HCT116 (cell line): ENCODE measurements at regions of chr1 and their contacts with region 1.

Region 1: DNA sequence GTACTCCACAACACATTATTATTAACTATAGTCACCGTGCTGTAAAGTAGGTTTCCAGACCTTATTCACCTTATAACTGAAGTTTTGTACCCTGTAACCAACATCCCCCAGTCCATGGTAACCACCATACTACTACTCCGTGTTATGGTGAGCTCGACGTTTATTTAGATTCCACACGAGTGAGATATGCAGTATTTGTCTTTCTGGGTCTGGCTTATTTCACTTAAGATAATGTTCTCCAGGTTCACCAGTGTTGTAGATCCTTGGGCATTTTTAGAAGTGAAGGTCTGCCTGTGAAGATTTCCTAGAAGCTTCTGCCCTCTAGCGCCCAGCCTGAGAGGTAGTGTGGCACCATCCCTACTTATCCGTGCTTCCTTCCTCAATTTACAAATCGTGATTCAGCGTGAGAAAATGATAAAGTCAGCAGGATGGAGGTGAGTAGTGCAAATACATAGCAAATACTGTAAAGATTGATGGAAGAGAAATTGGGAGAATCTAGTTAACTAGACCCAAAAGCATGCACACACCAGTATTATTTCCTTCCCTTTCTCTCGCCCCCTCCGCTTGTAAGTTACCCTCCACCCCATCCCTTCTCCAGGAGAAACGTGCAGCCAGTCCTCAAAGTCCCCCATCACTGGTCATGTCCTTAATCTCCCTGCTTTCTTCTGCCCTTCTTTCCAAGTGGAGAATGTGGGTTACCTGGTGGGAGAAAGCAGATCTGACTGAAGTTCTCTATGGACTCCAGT is 36.0 kb upstream of the DISC1 start:
- DNase-seq: peak; percentile 47
- ATAC-seq: peak; percentile 98
- H3K4me3 ChIP-seq: no peak overlapping the region
- H3K27ac ChIP-seq: no peak overlapping the region
- H3K4me1 ChIP-seq: no peaks in the 10 kb centered on the region
- H3K27me3 ChIP-seq: no peaks in the 10 kb centered on the region
- CTCF ChIP-seq: peak; percentile 70 to 90 (median 81)
- POLR2A ChIP-seq: no peak
- RAD21 ChIP-seq: peak; percentile 93

Region 2: GRCh38 chr1:231315887-231316286 is 274.7 kb before region 1 on chr1:
- CTCF ChIA-PET with region 1: interaction called, 3 read pairs
- POLR2A ChIA-PET with region 1: no interaction called
- RAD21 ChIA-PET with region 1: no interaction called
- intact Hi-C with region 1: loop called (anchors 1 kb)
- DNase-seq: peak; percentile 44
- ATAC-seq: peak; percentile 99
- H3K4me3 ChIP-seq: no peak overlapping the region
- H3K27ac ChIP-seq: no peak overlapping the region
- H3K4me1 ChIP-seq: peaks cover 0 to 3% of the 10 kb centered on the region in 2 experiments; a peak in 2 of 4 replicates
- H3K27me3 ChIP-seq: no peaks in the 10 kb centered on the region
- CTCF ChIP-seq: peak; percentile 70 to 85 (median 80)
- POLR2A ChIP-seq: no peak
- RAD21 ChIP-seq: peak; percentile 80

Region 3: DNA sequence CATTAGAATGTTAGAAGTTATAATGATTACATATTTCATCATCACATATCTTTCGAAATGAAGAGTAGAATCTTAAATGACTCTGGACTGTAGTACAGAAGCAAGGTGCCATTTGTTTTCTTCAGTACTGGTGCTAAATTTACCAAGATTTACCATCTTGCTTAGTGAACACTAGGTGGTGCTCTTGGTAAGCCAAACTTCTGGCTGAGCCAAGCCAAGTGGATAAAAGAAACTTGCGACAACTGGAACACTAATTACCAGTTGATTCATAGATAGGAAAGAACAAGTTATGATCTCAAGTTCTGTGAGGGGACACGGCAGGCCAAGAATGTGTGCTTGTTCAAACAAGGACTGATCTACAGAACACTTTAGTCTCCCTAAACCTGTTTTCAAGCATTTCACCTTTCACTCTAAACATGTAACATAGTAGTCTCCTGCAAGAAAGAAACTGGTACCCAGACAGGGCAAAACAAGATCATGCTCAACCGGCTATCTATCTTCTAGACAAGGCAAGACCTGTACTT is 232.7 kb before region 1 on chr1:
- CTCF ChIA-PET with region 1: no interaction called
- POLR2A ChIA-PET with region 1: no interaction called
- RAD21 ChIA-PET with region 1: no interaction called
- intact Hi-C with region 1: loop called (anchors 1 kb)
- DNase-seq: peak; percentile 48
- ATAC-seq: peak; percentile 88
- H3K4me3 ChIP-seq: no peak overlapping the region
- H3K27ac ChIP-seq: peak overlapping the region; percentile 25; the same call in 1 of the 2 replicates
- H3K4me1 ChIP-seq: peaks cover 0 to 3% of the 10 kb centered on the region in 2 experiments; a peak in 1 of 4 replicates
- H3K27me3 ChIP-seq: no peaks in the 10 kb centered on the region
- CTCF ChIP-seq: peak; percentile 65 to 87 (median 85)
- POLR2A ChIP-seq: no peak
- RAD21 ChIP-seq: peak; percentile 93

Region 4: GRCh38 chr1:231515748-231516147 is 74.9 kb before region 1 on chr1:
- CTCF ChIA-PET with region 1: no interaction called
- POLR2A ChIA-PET with region 1: no interaction called
- RAD21 ChIA-PET with region 1: no interaction called
- intact Hi-C with region 1: no loop called
- DNase-seq: no peak
- ATAC-seq: no peak
- H3K4me3 ChIP-seq: no peak overlapping the region
- H3K27ac ChIP-seq: no peak overlapping the region
- H3K4me1 ChIP-seq: peaks cover 0 to 35% of the 10 kb centered on the region in 2 experiments; a peak in 2 of 4 replicates
- H3K27me3 ChIP-seq: no peaks in the 10 kb centered on the region
- CTCF ChIP-seq: no peak
- POLR2A ChIP-seq: no peak
- RAD21 ChIP-seq: no peak